Posterior vena cava (tissue), 2 donors: ENCODE measurements at regions of chr5 and their contacts with region 1.

Region 1: GRCh38 chr5:96913233-96913632 is 22.6 kb upstream of the LNPEP start:
- DNase-seq: no peak

Region 2: GRCh38 chr5:96807075-96807654 is 106.1 kb before region 1 on chr5:
- intact Hi-C with region 1: no loop called
- DNase-seq: peak; percentile 93

Region 3: DNA sequence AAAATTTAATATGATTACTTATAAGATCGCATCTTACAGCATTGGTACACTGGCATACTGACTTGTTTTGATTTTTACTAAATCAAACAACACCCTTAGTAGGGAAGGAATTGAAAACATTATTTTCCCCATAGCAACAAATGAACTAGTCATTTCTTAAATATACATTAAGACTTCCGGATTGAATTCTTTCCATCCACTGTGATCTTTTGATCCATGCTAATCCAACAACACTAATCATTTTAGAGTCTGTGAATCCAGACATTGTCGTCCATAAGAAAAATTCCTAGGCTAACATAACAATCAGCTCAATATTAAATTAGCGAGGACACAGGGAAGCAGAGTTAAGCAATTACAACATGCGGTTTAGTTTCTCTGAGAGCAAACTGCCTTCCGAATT is 83.9 kb before region 1 on chr5:
- intact Hi-C with region 1: no loop called
- DNase-seq: no peak

Region 4: DNA sequence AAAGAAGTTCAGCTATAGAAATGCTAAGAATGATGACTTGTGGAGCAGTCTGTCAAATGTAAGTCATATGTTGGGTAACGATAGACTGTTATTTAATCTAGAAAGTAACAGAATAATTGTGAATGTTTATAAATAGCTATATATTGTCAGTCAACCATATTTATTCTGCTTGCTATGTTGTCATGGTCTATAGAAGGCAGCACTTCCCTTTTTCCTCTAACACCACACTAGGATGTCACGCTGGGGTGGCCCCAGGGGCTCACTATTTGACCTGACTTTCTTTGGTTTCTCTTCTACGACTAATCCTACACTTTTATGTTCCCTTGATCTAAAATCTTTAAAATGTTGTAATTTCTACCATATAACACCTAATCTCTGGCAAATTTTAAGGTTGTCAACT is 16.4 kb before region 1 on chr5:
- intact Hi-C with region 1: loop called in 1 of 2 experiments (anchors 1 kb)
- DNase-seq: no peak